ENCODE measurements at regions of chr5 and their contacts with region 1.

Region 1: GRCh38 chr5:73201547-73202513 is 28.8 kb downstream of the TMEM174 start:
- DNase-seq: peak; percentile 60
- H3K4me3 ChIP-seq: no peak overlapping the region
- H3K27ac ChIP-seq: no peak overlapping the region
- H3K4me1 ChIP-seq: no peaks in the 10 kb centered on the region
- H3K27me3 ChIP-seq: peaks cover 29 to 30% of the 10 kb centered on the region in 2 experiments
- CTCF ChIP-seq: peak; percentile 78 to 91
- POLR2A ChIP-seq: no peak

Region 2: DNA sequence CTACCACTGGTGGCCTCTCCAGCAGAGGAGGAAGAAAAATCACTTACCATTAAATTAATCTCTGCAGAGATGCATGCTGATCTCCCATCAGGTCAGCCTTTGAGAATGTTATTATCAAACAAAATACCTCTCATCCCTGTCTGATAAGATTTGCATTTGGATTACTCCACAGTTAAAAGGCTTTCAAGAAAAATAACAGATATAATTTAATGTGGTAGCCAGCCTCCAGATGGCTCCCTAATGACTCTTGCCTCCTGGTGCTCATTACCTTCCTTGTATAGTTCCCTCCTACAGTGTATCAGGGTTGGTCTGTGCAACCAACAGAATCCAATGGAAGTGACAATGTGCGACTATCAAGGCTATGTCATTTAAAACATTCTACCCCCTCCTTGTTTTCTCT is 448.9 kb before region 1 on chr5:
- CTCF ChIA-PET with region 1: no interaction called
- POLR2A ChIA-PET with region 1: no interaction called
- dilution Hi-C with region 1: no loop called
- intact Hi-C with region 1: no loop called
- DNase-seq: no peak
- H3K4me3 ChIP-seq: no peak overlapping the region
- H3K27ac ChIP-seq: no peak overlapping the region
- H3K4me1 ChIP-seq: no peaks in the 10 kb centered on the region
- H3K27me3 ChIP-seq: no peaks in the 10 kb centered on the region
- CTCF ChIP-seq: no peak
- POLR2A ChIP-seq: no peak

Region 3: DNA sequence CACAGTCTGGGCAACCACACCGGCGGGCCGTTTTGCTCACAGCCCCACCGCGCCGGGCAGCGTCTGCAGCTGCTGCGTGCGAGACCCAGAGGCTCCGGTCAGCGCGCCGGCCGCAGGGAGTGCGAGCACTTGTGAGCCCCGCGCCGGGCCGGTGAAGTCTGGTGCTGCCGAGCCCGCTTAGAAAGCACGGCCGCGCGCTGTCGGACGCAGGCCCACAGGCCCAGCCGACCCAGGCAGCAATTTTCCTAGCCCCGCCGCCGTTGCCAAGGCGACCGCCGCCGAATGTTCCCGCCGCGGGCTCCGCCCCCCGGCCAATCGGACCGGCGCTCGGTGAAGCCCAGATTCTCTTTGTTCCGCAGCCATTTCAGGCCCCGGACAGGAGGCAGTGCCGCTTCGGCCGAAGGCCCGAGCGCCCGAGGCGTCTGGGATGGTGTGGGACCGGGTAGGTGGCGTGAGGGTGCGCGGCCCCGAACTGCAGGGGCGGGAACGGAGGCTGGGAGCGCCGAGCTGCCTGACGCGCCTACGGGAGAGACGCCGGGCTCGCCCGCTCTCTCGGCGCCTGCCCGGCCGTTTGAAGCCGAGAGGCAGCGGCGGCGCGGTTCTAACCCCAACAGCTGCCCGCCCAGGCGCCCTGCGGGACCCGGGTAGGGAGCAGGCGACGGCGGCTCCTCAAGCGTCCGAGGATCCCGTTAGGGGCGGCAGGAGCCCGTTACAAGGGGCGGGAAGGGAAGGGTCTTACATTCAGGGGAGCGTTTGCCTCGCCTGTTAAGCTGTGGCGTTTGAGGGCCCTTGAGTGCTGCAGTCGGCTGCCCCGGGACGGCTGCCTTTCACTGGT is 385.3 kb before region 1 on chr5 and contains the start of gene TNPO1:
- CTCF ChIA-PET with region 1: no interaction called
- POLR2A ChIA-PET with region 1: no interaction called
- dilution Hi-C with region 1: no loop called
- intact Hi-C with region 1: no loop called
- DNase-seq: peak; percentile 96
- H3K4me3 ChIP-seq: peak within 1 kb of the TSS; percentile 92 to 100 (median 100)
- H3K27ac ChIP-seq: peak within 1 kb of the TSS; percentile 98
- H3K4me1 ChIP-seq: peaks cover 43% of the 10 kb centered on the region
- H3K27me3 ChIP-seq: no peaks in the 10 kb centered on the region
- CTCF ChIP-seq: no peak
- POLR2A ChIP-seq: peak; percentile 99
- total RNA-seq, gene TNPO1: 242 and 298 TPM in 2 replicates

Region 4: DNA sequence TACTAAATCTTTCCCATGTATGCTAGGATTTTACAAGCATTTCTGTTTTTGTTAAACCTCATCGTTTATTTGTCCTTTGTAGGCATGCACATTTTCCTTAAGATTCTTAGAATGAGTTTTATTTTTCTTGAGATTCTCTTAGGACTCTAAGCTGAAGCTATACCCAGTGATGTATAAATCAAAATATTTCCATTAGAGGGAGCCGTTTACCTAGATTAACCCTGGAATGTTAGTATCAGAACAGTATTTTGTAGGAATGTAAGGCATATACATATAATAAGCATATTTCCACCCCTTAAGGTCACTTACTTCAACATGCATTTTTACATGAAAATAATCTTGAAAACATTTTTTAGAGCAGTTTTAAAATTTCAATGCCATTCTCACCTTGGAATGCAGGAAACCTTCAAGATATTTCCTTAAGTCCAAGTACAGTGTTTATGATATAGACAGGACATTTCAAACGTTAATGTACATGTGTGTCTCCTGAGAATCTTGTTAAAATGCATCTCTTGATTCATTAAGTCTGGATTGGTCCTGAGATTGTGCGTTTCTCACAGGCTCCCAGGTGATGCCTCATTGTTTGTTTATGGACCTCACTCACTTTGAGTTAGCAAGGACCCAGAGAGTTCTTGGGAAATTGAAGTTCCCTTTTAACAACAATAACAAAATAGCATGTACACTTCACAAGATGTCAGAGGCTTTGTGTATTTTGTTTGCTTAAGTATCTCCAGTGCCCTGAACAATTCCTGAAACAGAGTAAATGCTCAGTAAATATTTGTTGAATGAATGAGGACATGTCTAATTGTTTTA is 280.9 kb before region 1 on chr5:
- CTCF ChIA-PET with region 1: interaction called, 11 read pairs
- POLR2A ChIA-PET with region 1: no interaction called
- dilution Hi-C with region 1: no loop called
- intact Hi-C with region 1: no loop called
- DNase-seq: peak; percentile 62
- H3K4me3 ChIP-seq: no peak overlapping the region
- H3K27ac ChIP-seq: no peak overlapping the region
- H3K4me1 ChIP-seq: no peaks in the 10 kb centered on the region
- H3K27me3 ChIP-seq: no peaks in the 10 kb centered on the region
- CTCF ChIP-seq: peak in 1 of 2 donors; percentile 5
- POLR2A ChIP-seq: no peak

Region 5: GRCh38 chr5:73088026-73088425 is 113.8 kb before region 1 on chr5:
- CTCF ChIA-PET with region 1: interaction called, 53 read pairs
- POLR2A ChIA-PET with region 1: no interaction called
- dilution Hi-C with region 1: no loop called
- intact Hi-C with region 1: loop called (anchors 1 kb)
- DNase-seq: no peak
- H3K4me3 ChIP-seq: no peak overlapping the region
- H3K27ac ChIP-seq: no peak overlapping the region
- H3K4me1 ChIP-seq: no peaks in the 10 kb centered on the region
- H3K27me3 ChIP-seq: no peaks in the 10 kb centered on the region
- CTCF ChIP-seq: no peak
- POLR2A ChIP-seq: no peak

Region 6: GRCh38 chr5:73093943-73094342 is 107.9 kb before region 1 on chr5:
- CTCF ChIA-PET with region 1: interaction called, 15 read pairs
- POLR2A ChIA-PET with region 1: no interaction called
- dilution Hi-C with region 1: no loop called
- intact Hi-C with region 1: no loop called
- DNase-seq: peak; percentile 8
- H3K4me3 ChIP-seq: no peak overlapping the region
- H3K27ac ChIP-seq: no peak overlapping the region
- H3K4me1 ChIP-seq: no peaks in the 10 kb centered on the region
- H3K27me3 ChIP-seq: no peaks in the 10 kb centered on the region
- CTCF ChIP-seq: no peak
- POLR2A ChIP-seq: no peak

Region 7: GRCh38 chr5:73135429-73136054 is 66.3 kb before region 1 on chr5:
- CTCF ChIA-PET with region 1: interaction called, 13 read pairs
- POLR2A ChIA-PET with region 1: no interaction called
- dilution Hi-C with region 1: no loop called
- intact Hi-C with region 1: loop called (anchors 1 kb)
- DNase-seq: peak; percentile 16
- H3K4me3 ChIP-seq: no peak overlapping the region
- H3K27ac ChIP-seq: no peak overlapping the region
- H3K4me1 ChIP-seq: no peaks in the 10 kb centered on the region
- H3K27me3 ChIP-seq: peaks cover 0 to 1% of the 10 kb centered on the region in 2 experiments
- CTCF ChIP-seq: peak; percentile 27 to 33
- POLR2A ChIP-seq: no peak